ENCODE measurements at regions of chr18 and their contacts with region 1.

Region 1: GRCh38 chr18:60895184-60895583 is 438.0 kb upstream of the CDH20 start:
- DNase-seq: no peak
- ATAC-seq: no peak
- H3K4me3 ChIP-seq: no peak overlapping the region
- H3K4me3 Mint-ChIP-seq: no peak overlapping the region
- H3K27ac ChIP-seq: no peak overlapping the region
- H3K27ac Mint-ChIP-seq: no peak overlapping the region
- H3K4me1 ChIP-seq: no peaks in the 10 kb centered on the region
- H3K4me1 Mint-ChIP-seq: no peaks in the 10 kb centered on the region
- H3K27me3 ChIP-seq: no peaks in the 10 kb centered on the region
- H3K27me3 Mint-ChIP-seq: no peaks in the 10 kb centered on the region
- CTCF ChIP-seq: no peak

Region 2: GRCh38 chr18:60585670-60586069 is 309.5 kb before region 1 on chr18:
- CTCF ChIA-PET with region 1: no interaction called
- POLR2A ChIA-PET with region 1: no interaction called
- intact Hi-C with region 1: no loop called
- DNase-seq: no peak
- ATAC-seq: no peak
- H3K4me3 ChIP-seq: no peak overlapping the region
- H3K4me3 Mint-ChIP-seq: no peak overlapping the region
- H3K27ac ChIP-seq: no peak overlapping the region
- H3K27ac Mint-ChIP-seq: no peak overlapping the region
- H3K4me1 ChIP-seq: no peaks in the 10 kb centered on the region
- H3K4me1 Mint-ChIP-seq: no peaks in the 10 kb centered on the region
- H3K27me3 ChIP-seq: no peaks in the 10 kb centered on the region
- H3K27me3 Mint-ChIP-seq: peaks cover 2% of the 10 kb centered on the region
- CTCF ChIP-seq: no peak

Region 3: DNA sequence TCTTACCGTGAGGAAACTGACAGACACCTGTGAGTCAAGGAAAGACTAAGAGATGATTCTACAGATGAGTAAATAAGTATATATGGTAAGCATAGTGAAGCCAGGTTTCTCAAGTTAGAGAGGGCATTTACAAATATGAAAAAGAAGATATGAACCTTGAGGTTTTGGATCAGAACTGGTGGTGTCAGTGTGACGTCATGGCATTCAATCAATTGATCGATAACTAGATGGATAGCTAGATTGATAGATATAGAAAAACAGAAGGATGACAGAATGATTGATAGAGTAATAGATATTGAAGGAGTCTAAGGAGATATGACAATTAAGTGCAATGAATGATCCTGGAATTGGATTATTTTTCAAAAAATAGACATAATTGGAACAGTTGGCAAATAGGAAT is 172.4 kb before region 1 on chr18:
- CTCF ChIA-PET with region 1: no interaction called
- POLR2A ChIA-PET with region 1: no interaction called
- intact Hi-C with region 1: no loop called
- DNase-seq: no peak
- ATAC-seq: no peak
- H3K4me3 ChIP-seq: no peak overlapping the region
- H3K4me3 Mint-ChIP-seq: no peak overlapping the region
- H3K27ac ChIP-seq: no peak overlapping the region
- H3K27ac Mint-ChIP-seq: no peak overlapping the region
- H3K4me1 ChIP-seq: no peaks in the 10 kb centered on the region
- H3K4me1 Mint-ChIP-seq: no peaks in the 10 kb centered on the region
- H3K27me3 ChIP-seq: no peaks in the 10 kb centered on the region
- H3K27me3 Mint-ChIP-seq: no peaks in the 10 kb centered on the region
- CTCF ChIP-seq: no peak

Region 4: DNA sequence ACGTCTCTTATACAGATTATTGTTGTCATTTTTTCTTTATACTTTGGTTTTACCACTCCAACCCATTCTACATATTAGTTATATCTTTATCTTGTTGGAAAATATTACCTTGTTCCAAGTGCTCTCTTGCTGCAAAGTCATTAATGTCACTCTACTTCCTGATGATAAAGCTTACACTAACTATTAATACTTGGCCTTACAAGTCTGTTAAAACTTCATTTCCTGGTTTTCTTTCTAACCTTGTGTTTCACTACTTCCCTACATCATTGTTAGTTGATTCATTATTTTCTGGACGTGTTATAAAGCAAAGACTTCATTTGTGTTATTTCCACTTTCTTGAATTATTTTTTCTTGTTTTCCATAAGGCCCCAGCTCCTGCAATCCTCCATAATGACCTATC is 55.5 kb after region 1 on chr18:
- CTCF ChIA-PET with region 1: no interaction called
- POLR2A ChIA-PET with region 1: no interaction called
- intact Hi-C with region 1: loop called in 1 of 2 experiments (anchors 5 kb)
- DNase-seq: no peak
- ATAC-seq: no peak
- H3K4me3 ChIP-seq: no peak overlapping the region
- H3K4me3 Mint-ChIP-seq: no peak overlapping the region
- H3K27ac ChIP-seq: no peak overlapping the region
- H3K27ac Mint-ChIP-seq: no peak overlapping the region
- H3K4me1 ChIP-seq: no peaks in the 10 kb centered on the region
- H3K4me1 Mint-ChIP-seq: no peaks in the 10 kb centered on the region
- H3K27me3 ChIP-seq: no peaks in the 10 kb centered on the region
- H3K27me3 Mint-ChIP-seq: no peaks in the 10 kb centered on the region
- CTCF ChIP-seq: no peak

Measured in CD8-positive, alpha-beta T cell (primary cell).